H1 (cell line): ENCODE measurements at regions of chr1 and their contacts with region 1.

Region 1: DNA sequence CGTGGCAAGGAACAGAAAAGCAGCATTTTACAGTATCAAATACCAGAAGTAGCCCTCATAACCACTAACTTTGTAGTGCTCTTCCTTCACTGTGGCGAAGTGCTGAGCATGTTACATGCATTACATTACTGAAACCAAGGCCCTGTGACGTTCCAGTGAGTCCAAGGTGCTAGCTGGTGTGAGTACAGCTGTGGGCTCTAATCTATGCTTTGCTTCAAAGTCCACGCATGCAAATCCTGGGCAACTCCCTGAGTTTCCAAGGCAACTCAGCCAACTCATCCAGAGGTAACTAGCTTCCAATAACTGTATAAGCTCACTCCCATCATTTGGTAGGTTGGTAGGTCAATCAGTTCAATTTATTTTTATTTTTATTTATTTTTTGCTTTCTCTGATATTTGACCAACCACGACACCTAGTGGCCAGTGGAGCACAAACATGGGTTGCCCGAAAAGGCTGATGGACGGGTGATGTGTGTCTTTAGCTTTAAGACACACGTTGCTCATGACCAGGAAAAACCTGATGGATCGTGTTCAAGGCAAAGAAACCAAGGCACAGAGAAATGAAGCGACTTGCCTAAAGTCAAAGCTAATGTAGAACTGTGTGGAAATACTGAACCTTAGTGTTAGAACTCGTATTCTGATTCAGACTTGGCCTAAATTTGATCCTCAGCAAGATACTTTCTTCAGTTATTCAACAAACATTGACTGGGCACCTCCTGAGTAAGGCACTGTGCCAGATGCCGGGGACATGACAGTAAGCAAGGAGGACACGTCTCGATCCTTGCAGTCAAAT is 73.0 kb downstream of the GNG12 start:
- DNase-seq: peak in 1 of 2 experiments; percentile 74
- H3K4me3 ChIP-seq: no peak overlapping the region
- H3K27ac ChIP-seq: no peak overlapping the region
- H3K4me1 ChIP-seq: no peaks in the 10 kb centered on the region
- H3K27me3 ChIP-seq: no peaks in the 10 kb centered on the region; a peak in 1 of 7 replicates
- CTCF ChIP-seq: peak; percentile 59 to 84 (median 61)
- EP300 ChIP-seq: no peak
- POLR2A ChIP-seq: no peak
- RAD21 ChIP-seq: peak; percentile 88

Region 2: GRCh38 chr1:67530071-67530470 is 230.2 kb before region 1 on chr1:
- CTCF ChIA-PET with region 1: interaction called, 161 read pairs
- POLR2A ChIA-PET with region 1: interaction called, 3 read pairs
- DNase-seq: no peak
- H3K4me3 ChIP-seq: no peak overlapping the region
- H3K27ac ChIP-seq: no peak overlapping the region
- H3K4me1 ChIP-seq: no peaks in the 10 kb centered on the region
- H3K27me3 ChIP-seq: peaks cover 0 to 3% (median 0%) of the 10 kb centered on the region in 4 experiments; a peak in 1 of 7 replicates
- CTCF ChIP-seq: no peak
- EP300 ChIP-seq: no peak
- POLR2A ChIP-seq: no peak
- RAD21 ChIP-seq: no peak

Region 3: DNA sequence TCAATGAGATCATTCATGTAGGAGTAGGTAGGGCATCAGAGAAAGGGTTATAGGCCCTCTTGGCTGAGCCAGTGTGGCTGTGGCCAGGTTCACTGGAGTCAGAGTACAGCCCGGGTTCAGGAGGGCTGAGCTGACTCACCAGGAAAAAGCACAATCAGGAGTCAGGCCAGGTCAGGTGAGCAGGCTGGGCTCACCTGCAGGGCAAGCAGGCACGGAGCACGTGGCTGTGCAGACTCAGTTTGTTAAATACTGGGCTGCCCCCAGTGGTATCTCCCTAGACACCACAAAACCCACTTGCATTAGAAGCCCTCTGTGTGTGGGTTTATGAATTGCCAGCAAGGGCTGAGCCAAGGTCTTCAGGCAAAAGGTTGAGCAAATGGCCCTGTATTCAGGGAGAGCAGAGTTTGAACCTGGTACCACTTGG is 207.9 kb before region 1 on chr1:
- CTCF ChIA-PET with region 1: interaction called, 146 read pairs
- POLR2A ChIA-PET with region 1: no interaction called
- DNase-seq: no peak
- H3K4me3 ChIP-seq: no peak overlapping the region
- H3K27ac ChIP-seq: no peak overlapping the region
- H3K4me1 ChIP-seq: peaks cover 0 to 4% (median 1%) of the 10 kb centered on the region in 4 experiments; a peak in 1 of 7 replicates
- H3K27me3 ChIP-seq: no peaks in the 10 kb centered on the region
- CTCF ChIP-seq: peak in 2 of 3 experiments; percentile 36 to 64; a peak in 3 of 4 replicates
- EP300 ChIP-seq: no peak
- POLR2A ChIP-seq: no peak
- RAD21 ChIP-seq: peak; percentile 27 to 28; a peak in 2 of 4 replicates

Region 4: GRCh38 chr1:67604778-67605177 is 155.4 kb before region 1 on chr1:
- CTCF ChIA-PET with region 1: interaction called, 16 read pairs
- POLR2A ChIA-PET with region 1: no interaction called
- DNase-seq: no peak
- H3K4me3 ChIP-seq: no peak overlapping the region
- H3K27ac ChIP-seq: no peak overlapping the region
- H3K4me1 ChIP-seq: peaks cover 0 to 6% (median 6%) of the 10 kb centered on the region in 4 experiments; a peak in 4 of 7 replicates
- H3K27me3 ChIP-seq: no peaks in the 10 kb centered on the region
- CTCF ChIP-seq: no peak
- EP300 ChIP-seq: no peak
- POLR2A ChIP-seq: no peak
- RAD21 ChIP-seq: no peak

Region 5: GRCh38 chr1:67685067-67685557 is 75.1 kb before region 1 on chr1 and contains the start of gene GADD45A:
- CTCF ChIA-PET with region 1: interaction called, 14 read pairs
- POLR2A ChIA-PET with region 1: interaction called, 3 read pairs
- DNase-seq: peak; percentile 96 to 97
- H3K4me3 ChIP-seq: peak within 1 kb of the TSS; percentile 84 to 98 (median 90)
- H3K27ac ChIP-seq: no peak within 1 kb of the TSS; the same call in 1 of the 2 replicates
- H3K4me1 ChIP-seq: peaks cover 0 to 9% (median 5%) of the 10 kb centered on the region in 4 experiments; a peak in 5 of 7 replicates
- H3K27me3 ChIP-seq: no peaks in the 10 kb centered on the region
- CTCF ChIP-seq: no peak
- EP300 ChIP-seq: peak in 1 of 2 experiments; percentile 32; a peak in 1 of 3 replicates
- POLR2A ChIP-seq: peak; percentile 96 to 98
- RAD21 ChIP-seq: peak; percentile 10; a peak in 1 of 4 replicates
- total RNA-seq, gene GADD45A: 15.5 and 15.6 TPM in 2 replicates

Region 6: GRCh38 chr1:67705735-67706453 is 54.3 kb before region 1 on chr1:
- CTCF ChIA-PET with region 1: interaction called, 40 read pairs
- POLR2A ChIA-PET with region 1: no interaction called
- DNase-seq: no peak
- H3K4me3 ChIP-seq: no peak overlapping the region
- H3K27ac ChIP-seq: no peak overlapping the region
- H3K4me1 ChIP-seq: no peaks in the 10 kb centered on the region; a peak in 1 of 7 replicates
- H3K27me3 ChIP-seq: peaks cover 0 to 1% (median 0%) of the 10 kb centered on the region in 4 experiments; a peak in 1 of 7 replicates
- CTCF ChIP-seq: no peak
- EP300 ChIP-seq: no peak
- POLR2A ChIP-seq: no peak
- RAD21 ChIP-seq: no peak

Region 7: DNA sequence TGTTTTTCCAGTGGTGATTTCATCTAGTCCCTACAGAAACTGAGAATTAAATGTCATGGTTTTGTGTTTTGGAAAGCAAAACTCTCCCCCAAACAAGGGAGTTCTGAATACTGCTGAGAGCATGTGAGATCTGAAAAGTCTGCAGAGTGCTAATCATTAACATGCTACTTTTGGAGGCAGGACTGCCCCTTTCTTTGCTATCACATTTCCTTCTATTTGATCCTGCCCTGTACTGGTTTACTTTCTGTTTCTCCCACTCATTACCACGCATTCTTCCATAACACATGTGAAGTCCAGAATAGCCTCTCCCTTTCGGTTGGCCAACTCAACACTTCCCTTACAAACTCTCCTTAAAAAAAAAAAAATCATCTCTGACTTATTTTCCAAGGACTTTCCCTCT is 11.6 kb before region 1 on chr1:
- CTCF ChIA-PET with region 1: interaction called, 156 read pairs
- POLR2A ChIA-PET with region 1: interaction called, 3 read pairs
- DNase-seq: no peak
- H3K4me3 ChIP-seq: peak overlapping the region in 1 of 4 experiments; percentile 44; a peak in 2 of 8 replicates
- H3K27ac ChIP-seq: no peak overlapping the region
- H3K4me1 ChIP-seq: peaks cover 9 to 38% (median 33%) of the 10 kb centered on the region in 4 experiments; a peak in 6 of 7 replicates
- H3K27me3 ChIP-seq: no peaks in the 10 kb centered on the region
- CTCF ChIP-seq: no peak
- EP300 ChIP-seq: no peak
- POLR2A ChIP-seq: no peak
- RAD21 ChIP-seq: no peak

Region 8: DNA sequence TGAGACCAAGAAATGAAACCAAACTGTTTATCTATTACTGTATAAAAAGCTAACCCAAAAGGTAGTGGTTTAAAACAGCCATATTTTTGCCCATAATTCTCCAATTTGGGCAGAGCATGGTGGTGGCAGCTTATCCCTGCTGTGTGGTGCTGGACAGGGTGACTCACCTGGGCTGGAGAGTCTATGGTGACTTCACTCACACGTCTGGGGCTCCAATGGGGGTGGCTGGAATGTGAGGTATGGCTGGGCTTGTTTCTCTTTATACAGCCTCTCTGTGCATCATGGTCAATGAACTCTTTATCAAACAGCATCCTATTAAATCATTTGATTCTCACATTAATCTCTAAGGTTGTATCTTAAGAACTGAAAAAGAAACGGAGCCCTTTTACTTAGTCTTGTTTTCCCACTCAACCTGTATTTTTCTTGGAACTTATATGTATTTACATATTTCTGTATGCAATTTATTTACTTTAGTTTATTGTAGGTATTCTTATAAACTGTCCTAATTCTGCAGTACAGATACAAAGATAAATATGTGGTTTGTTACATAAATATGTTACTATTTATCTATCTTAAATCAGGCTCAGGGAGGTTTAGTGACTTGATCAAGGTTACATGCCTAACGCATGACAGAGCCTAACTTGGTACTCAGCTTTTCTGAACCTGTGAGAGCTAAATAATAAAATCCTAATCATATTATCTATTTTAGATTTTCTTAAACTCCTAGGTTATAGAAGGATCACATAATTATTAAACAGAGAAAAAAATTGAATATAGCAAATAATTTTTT is 509.6 kb after region 1 on chr1:
- CTCF ChIA-PET with region 1: no interaction called
- POLR2A ChIA-PET with region 1: no interaction called
- DNase-seq: no peak
- H3K4me3 ChIP-seq: no peak overlapping the region
- H3K27ac ChIP-seq: no peak overlapping the region
- H3K4me1 ChIP-seq: no peaks in the 10 kb centered on the region
- H3K27me3 ChIP-seq: peaks cover 11 to 19% (median 13%) of the 10 kb centered on the region in 4 experiments
- CTCF ChIP-seq: no peak
- EP300 ChIP-seq: no peak
- POLR2A ChIP-seq: no peak
- RAD21 ChIP-seq: no peak